ENCODE measurements at regions of chr14 and their contacts with region 1.

Region 1: DNA sequence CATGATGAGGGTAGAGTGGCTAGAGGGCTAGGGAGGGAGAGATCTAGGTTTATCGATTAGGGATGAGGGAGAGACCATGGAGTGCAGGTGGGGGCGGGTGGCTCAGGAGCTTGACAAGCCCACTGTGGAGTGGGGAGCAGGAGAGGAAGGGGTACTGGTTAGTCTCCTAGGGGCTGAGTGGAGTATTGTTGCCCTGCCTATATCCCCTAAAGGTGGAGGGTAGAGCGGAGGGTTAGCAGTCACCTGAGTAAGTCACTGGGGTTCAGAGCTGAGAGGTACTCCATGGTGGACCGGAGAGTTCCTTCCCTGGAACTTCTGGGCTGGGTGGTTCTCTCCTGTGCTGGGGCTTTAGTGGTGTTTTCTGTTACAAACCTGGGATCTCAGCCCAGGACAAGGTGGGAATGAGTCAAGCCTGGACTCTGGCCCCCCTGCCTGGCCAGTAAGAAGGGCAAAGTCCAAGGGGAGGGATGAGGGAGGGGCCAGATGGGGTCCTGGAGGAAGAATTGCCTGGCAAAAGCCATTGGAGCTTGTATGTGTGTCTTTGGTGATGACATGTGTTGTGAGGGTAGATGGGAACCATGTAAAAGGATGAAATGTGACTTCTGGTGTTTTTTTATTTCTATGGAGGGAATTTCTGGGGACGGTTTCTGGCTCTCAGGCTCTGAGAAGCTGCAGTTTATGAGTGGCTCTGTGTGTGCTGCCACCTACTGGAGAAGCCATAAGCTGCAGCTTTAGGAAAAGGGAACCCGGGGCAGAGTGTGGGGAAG is at the start of gene CIDEB:
- DNase-seq: peak; percentile 78

Region 2: DNA sequence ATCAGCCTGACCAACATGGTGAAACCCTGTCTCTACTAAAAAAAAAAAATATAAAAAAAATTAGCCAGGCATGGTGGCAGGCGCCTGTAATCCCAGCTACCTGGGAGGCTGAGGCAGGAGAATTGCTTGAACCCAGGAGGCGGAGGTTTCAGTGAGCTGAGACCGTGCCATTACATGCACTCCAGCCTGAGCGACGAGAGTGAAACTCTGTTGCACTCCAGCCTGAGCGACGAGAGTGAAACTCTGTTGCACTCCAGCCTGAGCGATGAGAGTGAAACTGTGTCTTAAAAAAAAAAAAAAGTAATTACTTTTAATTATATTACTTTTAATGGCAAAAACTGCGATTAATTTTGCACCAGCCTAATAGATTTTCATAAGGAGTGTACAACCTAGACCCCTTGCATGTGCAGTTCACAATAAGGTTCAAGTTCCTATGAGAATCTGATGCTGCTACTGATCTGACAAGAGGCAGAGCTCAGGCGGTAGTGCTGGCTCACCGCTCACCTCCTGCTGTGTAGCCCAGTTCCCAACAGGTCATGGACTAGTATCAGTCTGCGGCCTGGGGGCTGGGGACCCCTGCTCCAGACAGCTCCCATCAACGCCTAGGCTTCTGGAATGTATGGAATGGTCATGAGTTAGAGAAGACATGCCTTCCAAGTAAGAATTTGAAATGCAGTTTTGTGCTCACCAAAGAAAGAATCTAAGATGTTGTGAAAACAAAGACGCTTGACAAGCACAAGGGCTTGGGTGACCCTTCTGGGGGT is 13.6 kb after region 1 on chr14:
- CTCF ChIA-PET with region 1: interaction called, 14 read pairs
- POLR2A ChIA-PET with region 1: interaction called, 3 read pairs
- DNase-seq: no peak

Measured in HEK293T (cell line).